ENCODE measurements at regions of chr1 and their contacts with region 1.

Region 1: DNA sequence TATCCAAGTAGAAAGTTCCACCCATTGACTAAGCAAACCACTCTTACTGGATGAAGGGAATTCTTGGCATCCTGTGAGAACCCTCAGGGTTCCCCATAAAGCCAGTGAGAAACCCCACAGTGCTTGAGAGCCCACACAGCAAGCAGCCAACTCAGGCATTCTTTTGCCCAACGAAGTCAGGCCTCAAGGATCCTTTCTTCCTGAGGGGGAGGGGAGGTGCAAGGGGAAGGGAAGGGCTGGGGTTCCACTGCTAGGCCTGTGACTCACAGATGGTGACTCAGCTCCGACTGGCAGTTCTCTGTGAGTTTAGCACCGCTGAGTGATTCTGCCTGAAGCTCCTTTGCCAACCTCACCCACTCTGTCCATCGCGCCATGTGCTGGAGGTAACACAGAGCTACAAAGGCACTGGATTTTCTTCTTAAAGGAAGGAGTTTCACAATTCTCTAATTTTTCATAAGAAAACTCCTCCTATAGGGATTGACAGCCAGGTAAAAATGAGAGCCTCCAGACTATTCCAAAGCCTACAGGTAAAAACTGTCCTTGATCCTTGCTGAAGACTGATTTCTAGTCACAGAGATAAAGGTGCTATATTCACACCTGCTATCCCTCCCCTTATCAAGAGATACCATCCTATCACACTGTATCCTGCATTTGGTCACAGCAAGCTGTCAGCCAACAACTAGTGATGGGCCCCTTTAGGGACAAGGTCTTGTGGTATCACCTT is 4.8 kb downstream of the ENO1 start:
- DNase-seq: peak; percentile 86
- H3K4me3 ChIP-seq: peak overlapping the region; percentile 30
- CTCF ChIP-seq: no peak

Region 2: DNA sequence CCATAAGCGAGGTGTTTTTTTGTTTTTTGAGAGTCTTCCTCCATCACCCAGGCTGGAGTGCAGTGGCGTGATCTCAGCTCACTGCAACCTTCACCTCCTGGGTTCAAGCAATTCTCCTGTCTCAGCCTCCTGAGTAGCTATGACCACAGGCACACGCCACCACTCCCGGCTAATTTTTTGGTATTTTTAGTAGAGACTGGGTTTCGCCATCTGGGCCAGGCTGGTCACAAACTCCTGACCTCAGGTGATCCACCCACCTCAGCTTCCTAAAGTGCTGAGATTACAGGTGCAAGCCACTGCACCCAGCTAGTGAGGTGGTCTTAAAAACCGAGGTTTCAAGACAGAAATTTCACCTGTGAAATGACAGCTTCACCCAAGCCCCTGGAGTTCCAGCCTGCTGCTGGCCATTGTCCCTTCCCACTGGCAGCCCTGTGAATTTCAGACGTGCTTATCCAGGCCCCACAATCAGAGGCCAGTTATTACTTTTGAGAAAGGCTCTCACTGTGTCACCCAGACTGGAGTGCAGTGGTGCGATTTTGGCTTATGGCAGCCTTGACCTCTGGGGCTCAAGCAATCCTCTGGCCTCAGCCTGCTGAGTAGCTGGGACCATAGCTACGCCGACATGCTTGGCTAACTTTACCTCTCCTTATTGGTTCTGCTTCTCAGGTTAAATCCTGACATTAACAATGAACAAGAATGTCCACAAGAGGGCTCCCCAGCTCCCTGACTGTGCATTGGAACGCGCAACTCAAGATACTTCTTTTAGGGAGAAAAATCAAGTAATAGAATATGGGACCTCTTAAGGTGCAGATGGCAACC is 14.6 kb before region 1 on chr1:
- CTCF ChIA-PET with region 1: interaction called, 73 read pairs
- POLR2A ChIA-PET with region 1: interaction called, 26 read pairs
- DNase-seq: no peak
- H3K4me3 ChIP-seq: no peak overlapping the region
- CTCF ChIP-seq: peak; percentile 60

Region 3: DNA sequence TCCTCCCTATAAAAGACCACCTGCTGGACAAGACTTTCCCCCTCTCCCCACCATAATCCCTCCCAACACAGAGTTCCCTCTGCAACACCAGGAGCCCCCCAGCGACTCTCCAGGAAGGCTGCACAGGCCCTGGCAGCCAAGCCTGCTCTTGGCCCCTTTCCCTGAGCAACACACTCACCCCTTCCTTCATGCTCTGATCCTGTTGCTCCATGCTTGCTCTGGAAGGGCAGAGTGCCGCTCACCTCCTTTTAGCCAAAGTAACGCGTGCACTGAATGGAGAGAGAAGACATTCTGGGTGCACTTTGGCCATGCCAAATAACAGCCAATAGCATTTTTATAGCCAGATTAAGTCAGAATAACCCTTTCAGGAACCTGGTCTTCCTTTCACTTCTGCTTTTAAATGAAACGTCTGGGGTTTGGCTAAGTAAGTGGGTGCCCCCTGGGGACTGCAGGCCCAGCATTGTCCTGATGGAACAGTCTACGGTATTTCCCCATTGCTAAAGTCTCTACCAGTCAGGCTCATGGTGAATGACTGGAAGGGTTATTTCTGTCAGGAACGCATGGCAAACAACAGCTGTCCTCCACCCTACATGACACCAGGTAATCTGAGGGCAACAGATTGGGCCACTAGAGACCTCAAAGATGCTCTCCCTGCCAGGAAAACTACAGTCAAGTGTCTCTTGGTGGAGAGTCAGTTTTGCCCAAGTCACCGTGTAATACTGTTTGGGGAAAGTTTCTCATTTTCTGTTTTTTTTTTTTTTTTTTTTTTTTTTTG is 195.8 kb after region 1 on chr1 and contains the start of gene SLC2A5:
- CTCF ChIA-PET with region 1: no interaction called
- POLR2A ChIA-PET with region 1: no interaction called
- DNase-seq: no peak
- H3K4me3 ChIP-seq: no peak within 1 kb of the TSS
- CTCF ChIP-seq: no peak